ENCODE measurements at regions of chr5 and their contacts with region 1.

Region 1: GRCh38 chr5:88680253-88681132 is 202.5 kb downstream of the MEF2C start:
- DNase-seq: peak; percentile 63 to 79 (median 71)
- H3K4me3 ChIP-seq: peak overlapping the region; percentile 55
- H3K4me3 Mint-ChIP-seq: peak overlapping the region; percentile 27 to 79 (median 57)
- H3K27ac ChIP-seq: no peak overlapping the region
- H3K27ac Mint-ChIP-seq: peak overlapping the region in 1 of 8 donors; percentile 19
- H3K4me1 ChIP-seq: peaks cover 15% of the 10 kb centered on the region
- H3K4me1 Mint-ChIP-seq: peaks cover 19 to 24% (median 21%) of the 10 kb centered on the region in 3 donors
- H3K27me3 ChIP-seq: peaks cover 75% of the 10 kb centered on the region
- H3K27me3 Mint-ChIP-seq: peaks cover 62 to 80% of the 10 kb centered on the region in 2 donors

Region 2: GRCh38 chr5:87780831-87781760 is 899.4 kb before region 1 on chr5:
- CTCF ChIA-PET with region 1: interaction called, 44 read pairs
- POLR2A ChIA-PET with region 1: no interaction called
- DNase-seq: peak; percentile 62 to 83 (median 66)
- H3K4me3 ChIP-seq: no peak overlapping the region
- H3K4me3 Mint-ChIP-seq: no peak overlapping the region
- H3K27ac ChIP-seq: no peak overlapping the region
- H3K27ac Mint-ChIP-seq: no peak overlapping the region
- H3K4me1 ChIP-seq: no peaks in the 10 kb centered on the region
- H3K4me1 Mint-ChIP-seq: peaks cover 2 to 4% (median 3%) of the 10 kb centered on the region in 3 donors
- H3K27me3 ChIP-seq: peaks cover 6% of the 10 kb centered on the region
- H3K27me3 Mint-ChIP-seq: peaks cover 11 to 41% of the 10 kb centered on the region in 2 donors

Region 3: DNA sequence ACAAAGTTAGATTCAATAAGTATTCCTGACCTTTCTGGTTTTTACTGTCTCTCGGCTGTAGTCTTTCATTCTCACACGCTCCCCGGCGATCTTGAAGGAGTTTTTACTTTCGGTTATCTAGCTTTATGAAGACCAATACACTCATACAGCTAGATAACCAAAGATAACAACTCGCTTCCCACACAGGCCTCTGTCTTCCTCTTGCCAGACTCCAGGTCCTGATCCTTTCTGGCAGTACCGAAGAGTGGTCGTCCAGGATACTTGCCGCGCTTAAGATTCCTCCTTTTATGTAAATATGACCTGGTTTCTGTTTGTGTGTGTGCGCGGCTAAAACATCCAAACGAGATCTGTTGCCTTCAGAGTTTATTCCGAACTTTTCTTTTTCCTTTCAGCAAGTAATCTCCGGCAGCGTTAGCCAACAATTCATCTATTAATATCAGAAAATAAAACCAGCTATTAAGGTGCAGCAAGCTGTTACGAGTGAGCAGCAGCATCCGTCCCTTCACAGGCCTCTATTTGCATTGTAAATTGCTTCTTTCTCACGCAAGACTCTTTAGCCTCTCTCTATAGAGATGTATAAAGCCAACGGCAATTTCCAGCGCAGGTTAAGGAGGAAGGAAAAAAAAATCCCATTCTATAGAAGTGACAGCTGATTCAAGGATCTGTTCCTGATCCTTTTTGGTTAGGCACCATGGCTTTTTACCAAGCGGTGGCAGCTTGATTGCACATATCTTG is 13.6 kb before region 1 on chr5:
- CTCF ChIA-PET with region 1: interaction called, 10 read pairs
- POLR2A ChIA-PET with region 1: no interaction called
- DNase-seq: no peak
- H3K4me3 ChIP-seq: peak overlapping the region; percentile 50
- H3K4me3 Mint-ChIP-seq: peak overlapping the region; percentile 74 to 88 (median 82)
- H3K27ac ChIP-seq: no peak overlapping the region
- H3K27ac Mint-ChIP-seq: peak overlapping the region in 5 of 8 donors; percentile 4 to 48 (median 26)
- H3K4me1 ChIP-seq: peaks cover 10% of the 10 kb centered on the region
- H3K4me1 Mint-ChIP-seq: peaks cover 28 to 29% (median 29%) of the 10 kb centered on the region in 3 donors
- H3K27me3 ChIP-seq: peaks cover 51% of the 10 kb centered on the region
- H3K27me3 Mint-ChIP-seq: peaks cover 78 to 95% of the 10 kb centered on the region in 2 donors

Region 4: GRCh38 chr5:88690409-88691229 is 10.1 kb after region 1 on chr5:
- CTCF ChIA-PET with region 1: interaction called, 32 read pairs
- POLR2A ChIA-PET with region 1: no interaction called
- DNase-seq: peak; percentile 43 to 75 (median 56)
- H3K4me3 ChIP-seq: no peak overlapping the region
- H3K4me3 Mint-ChIP-seq: peak overlapping the region; percentile 40 to 81 (median 75)
- H3K27ac ChIP-seq: no peak overlapping the region
- H3K27ac Mint-ChIP-seq: peak overlapping the region in 6 of 8 donors; percentile 10 to 83 (median 59)
- H3K4me1 ChIP-seq: peaks cover 16% of the 10 kb centered on the region
- H3K4me1 Mint-ChIP-seq: peaks cover 13 to 24% (median 21%) of the 10 kb centered on the region in 3 donors
- H3K27me3 ChIP-seq: peaks cover 90% of the 10 kb centered on the region
- H3K27me3 Mint-ChIP-seq: peaks cover 85 to 95% of the 10 kb centered on the region in 2 donors

Region 5: GRCh38 chr5:88727705-88728313 is 47.3 kb after region 1 on chr5:
- CTCF ChIA-PET with region 1: no interaction called
- POLR2A ChIA-PET with region 1: no interaction called
- DNase-seq: no peak
- H3K4me3 ChIP-seq: no peak overlapping the region
- H3K4me3 Mint-ChIP-seq: no peak overlapping the region
- H3K27ac ChIP-seq: no peak overlapping the region
- H3K27ac Mint-ChIP-seq: no peak overlapping the region
- H3K4me1 ChIP-seq: no peaks in the 10 kb centered on the region
- H3K4me1 Mint-ChIP-seq: no peaks in the 10 kb centered on the region
- H3K27me3 ChIP-seq: no peaks in the 10 kb centered on the region
- H3K27me3 Mint-ChIP-seq: peaks cover under 1 to 32% of the 10 kb centered on the region in 2 donors

Region 6: GRCh38 chr5:88792144-88792840 is 111.8 kb after region 1 on chr5:
- CTCF ChIA-PET with region 1: no interaction called
- POLR2A ChIA-PET with region 1: no interaction called
- DNase-seq: no peak
- H3K4me3 ChIP-seq: no peak overlapping the region
- H3K4me3 Mint-ChIP-seq: no peak overlapping the region
- H3K27ac ChIP-seq: no peak overlapping the region
- H3K27ac Mint-ChIP-seq: no peak overlapping the region
- H3K4me1 ChIP-seq: no peaks in the 10 kb centered on the region
- H3K4me1 Mint-ChIP-seq: no peaks in the 10 kb centered on the region
- H3K27me3 ChIP-seq: no peaks in the 10 kb centered on the region
- H3K27me3 Mint-ChIP-seq: peaks cover 0 to 2% of the 10 kb centered on the region in 2 donors

Measured in CD8-positive, alpha-beta memory T cell (primary cell).